ENCODE measurements at regions of chr2 and their contacts with region 1.

Region 1: DNA sequence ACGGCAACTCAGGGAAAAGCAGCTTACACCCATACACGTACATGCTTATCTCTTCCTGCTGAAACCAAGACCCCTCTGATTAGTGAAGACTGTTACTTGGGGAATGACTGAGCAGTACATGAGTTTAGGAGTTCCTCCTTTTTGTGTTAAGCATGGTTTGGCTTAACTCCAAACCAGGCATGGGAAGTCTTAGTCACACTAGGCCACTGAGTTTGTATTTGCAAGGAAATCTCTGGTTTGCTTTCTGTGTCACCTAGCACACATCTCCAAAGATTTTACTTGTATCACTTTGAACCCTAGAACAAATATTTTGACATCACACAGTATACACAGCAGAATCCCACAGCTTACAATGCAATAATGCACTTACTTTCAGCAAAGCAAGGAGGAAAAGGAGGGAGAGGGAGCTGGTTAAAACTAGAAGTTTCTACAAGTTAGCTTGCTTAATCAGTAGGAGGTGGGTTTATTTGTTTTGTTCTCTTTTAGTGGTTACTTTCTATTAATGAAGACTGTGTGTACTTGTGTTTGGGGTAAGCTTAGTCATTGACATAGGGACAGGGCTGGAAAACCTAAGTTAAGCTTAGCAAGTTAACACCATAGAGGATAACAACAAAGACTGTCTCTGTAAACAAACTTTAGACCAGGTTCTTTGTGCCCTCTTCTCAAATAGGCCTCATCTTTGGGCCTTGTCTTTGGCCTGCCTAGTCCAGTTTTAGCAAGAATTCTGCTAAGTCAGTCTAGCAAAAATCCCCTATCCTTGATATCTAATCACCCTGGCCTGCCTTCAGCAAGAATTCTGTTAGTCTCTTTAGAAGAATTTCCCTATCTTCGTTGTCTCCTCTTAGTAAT is 219.4 kb downstream of the MREG start:
- DNase-seq: peak; percentile 97
- ATAC-seq: peak; percentile 92
- H3K4me3 ChIP-seq: no peak overlapping the region
- H3K27ac ChIP-seq: peak overlapping the region; percentile 80
- H3K4me1 ChIP-seq: peaks cover 35% of the 10 kb centered on the region
- H3K27me3 ChIP-seq: no peaks in the 10 kb centered on the region
- CTCF ChIP-seq: no peak

Region 2: DNA sequence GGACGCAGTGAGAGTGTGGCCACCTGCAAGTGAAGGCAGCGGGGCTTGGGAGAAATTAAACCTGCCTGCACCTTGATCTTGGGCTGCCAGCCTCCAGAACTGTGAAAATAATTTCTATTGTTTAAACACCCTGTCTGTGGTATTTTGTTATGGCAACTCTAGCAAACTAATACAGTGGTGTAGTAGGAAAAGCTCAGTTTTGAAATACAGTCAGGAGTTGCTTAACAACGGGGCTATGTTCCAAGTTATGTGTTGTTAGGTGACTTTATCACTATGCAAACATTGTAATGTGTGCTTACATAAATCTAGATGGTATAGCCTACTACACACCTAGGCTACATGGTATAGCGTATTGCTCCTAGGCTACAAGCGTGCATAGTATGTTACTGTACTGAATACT is 264.7 kb before region 1 on chr2:
- CTCF ChIA-PET with region 1: interaction called, 3 read pairs
- POLR2A ChIA-PET with region 1: no interaction called
- intact Hi-C with region 1: loop called (anchors 1 kb)
- DNase-seq: peak; percentile 97
- ATAC-seq: peak; percentile 82
- H3K4me3 ChIP-seq: peak overlapping the region; percentile 37
- H3K27ac ChIP-seq: peak overlapping the region; percentile 99
- H3K4me1 ChIP-seq: peaks cover 42% of the 10 kb centered on the region
- H3K27me3 ChIP-seq: no peaks in the 10 kb centered on the region
- CTCF ChIP-seq: no peak

Region 3: GRCh38 chr2:215657844-215658243 is 136.1 kb before region 1 on chr2:
- CTCF ChIA-PET with region 1: no interaction called
- POLR2A ChIA-PET with region 1: no interaction called
- intact Hi-C with region 1: loop called (anchors 1 kb)
- DNase-seq: peak; percentile 87
- ATAC-seq: peak; percentile 85
- H3K4me3 ChIP-seq: no peak overlapping the region
- H3K27ac ChIP-seq: peak overlapping the region; percentile 8; the same call in 1 of the 2 replicates
- H3K4me1 ChIP-seq: peaks cover 14% of the 10 kb centered on the region
- H3K27me3 ChIP-seq: no peaks in the 10 kb centered on the region
- CTCF ChIP-seq: no peak

Region 4: GRCh38 chr2:215711471-215712034 is 82.4 kb before region 1 on chr2:
- CTCF ChIA-PET with region 1: no interaction called
- POLR2A ChIA-PET with region 1: interaction called, 3 read pairs
- intact Hi-C with region 1: loop called (anchors 1 kb)
- DNase-seq: peak; percentile 95
- ATAC-seq: peak; percentile 92
- H3K4me3 ChIP-seq: peak overlapping the region; percentile 1; the same call in 1 of the 2 replicates
- H3K27ac ChIP-seq: peak overlapping the region; percentile 68
- H3K4me1 ChIP-seq: peaks cover 48% of the 10 kb centered on the region
- H3K27me3 ChIP-seq: no peaks in the 10 kb centered on the region
- CTCF ChIP-seq: no peak

Region 5: GRCh38 chr2:215878482-215879055 is 84.6 kb after region 1 on chr2:
- CTCF ChIA-PET with region 1: no interaction called
- POLR2A ChIA-PET with region 1: no interaction called
- intact Hi-C with region 1: loop called (anchors 5 kb)
- DNase-seq: peak; percentile 73
- ATAC-seq: no peak
- H3K4me3 ChIP-seq: no peak overlapping the region
- H3K27ac ChIP-seq: peak overlapping the region; percentile 16
- H3K4me1 ChIP-seq: peaks cover 55% of the 10 kb centered on the region
- H3K27me3 ChIP-seq: no peaks in the 10 kb centered on the region
- CTCF ChIP-seq: no peak

Region 6: GRCh38 chr2:215888680-215889079 is 94.7 kb after region 1 on chr2:
- CTCF ChIA-PET with region 1: no interaction called
- POLR2A ChIA-PET with region 1: no interaction called
- intact Hi-C with region 1: no loop called
- DNase-seq: no peak
- ATAC-seq: no peak
- H3K4me3 ChIP-seq: no peak overlapping the region
- H3K27ac ChIP-seq: no peak overlapping the region
- H3K4me1 ChIP-seq: no peaks in the 10 kb centered on the region
- H3K27me3 ChIP-seq: no peaks in the 10 kb centered on the region
- CTCF ChIP-seq: no peak